PC-3 (cell line): ENCODE measurements at regions of chr1 and their contacts with region 1.

Region 1: GRCh38 chr1:1231400-1232223 is at the start of gene SDF4:
- DNase-seq: peak; percentile 99
- ATAC-seq: peak; percentile 84
- H3K4me3 ChIP-seq: peak within 1 kb of the TSS; percentile 81
- H3K27ac ChIP-seq: peak within 1 kb of the TSS; percentile 47
- H3K4me1 ChIP-seq: peaks cover 36% of the 10 kb centered on the region
- H3K27me3 ChIP-seq: no peaks in the 10 kb centered on the region
- CTCF ChIP-seq: no peak
- total RNA-seq, gene SDF4: 254 and 317 TPM in 2 replicates

Region 2: GRCh38 chr1:1164701-1165451 is 66.7 kb before region 1 on chr1:
- CTCF ChIA-PET with region 1: no interaction called
- POLR2A ChIA-PET with region 1: no interaction called
- intact Hi-C with region 1: loop called (anchors 2 kb)
- DNase-seq: peak; percentile 82
- ATAC-seq: peak; percentile 34
- H3K4me3 ChIP-seq: peak overlapping the region; percentile 90
- H3K27ac ChIP-seq: peak overlapping the region; percentile 73
- H3K4me1 ChIP-seq: peaks cover 17% of the 10 kb centered on the region
- H3K27me3 ChIP-seq: no peaks in the 10 kb centered on the region
- CTCF ChIP-seq: no peak

Region 3: DNA sequence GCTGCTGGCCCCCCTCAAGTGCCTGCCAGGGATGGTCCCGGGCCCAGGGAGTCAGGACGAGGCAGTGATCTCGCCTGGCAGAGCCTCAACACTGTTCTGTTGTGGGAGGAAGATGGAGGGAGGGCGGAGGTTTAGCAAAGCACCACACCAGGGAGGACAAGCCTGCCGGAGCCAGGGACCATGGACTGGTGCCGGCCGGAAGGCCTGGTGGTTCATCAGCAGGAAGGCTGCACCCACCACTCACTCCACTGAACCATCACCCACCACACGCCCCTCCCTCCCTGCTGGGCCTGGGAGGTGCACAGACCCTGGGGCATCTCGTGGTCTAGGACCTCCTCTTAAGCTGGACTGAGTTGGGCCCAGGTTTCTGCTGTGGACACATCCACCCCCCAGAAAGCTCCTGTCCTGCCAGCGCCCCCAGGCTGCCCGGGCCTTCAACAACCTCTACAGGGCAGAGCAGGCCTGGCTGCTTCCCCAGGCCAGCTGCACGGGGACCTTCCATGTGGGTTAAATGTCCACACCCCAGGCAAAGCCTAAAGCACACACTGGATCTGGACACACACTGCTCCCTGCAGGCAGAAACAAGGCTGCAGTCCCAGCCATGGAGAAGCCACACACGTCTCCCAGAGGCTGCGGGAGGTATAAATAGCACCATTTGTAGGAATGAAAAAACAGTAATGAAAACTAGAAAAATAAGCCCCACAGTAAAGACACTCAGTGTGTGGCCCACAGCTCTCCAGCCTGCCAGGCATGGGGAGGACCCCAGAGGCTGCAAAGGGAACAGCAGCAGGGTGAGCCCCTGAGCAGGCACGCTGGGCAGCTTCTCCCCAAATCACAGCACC is 319.2 kb after region 1 on chr1:
- CTCF ChIA-PET with region 1: no interaction called
- POLR2A ChIA-PET with region 1: no interaction called
- intact Hi-C with region 1: no loop called
- DNase-seq: peak; percentile 34
- ATAC-seq: peak; percentile 34
- H3K4me3 ChIP-seq: no peak overlapping the region
- H3K27ac ChIP-seq: no peak overlapping the region
- H3K4me1 ChIP-seq: peaks cover 4% of the 10 kb centered on the region; the same call in 1 of the 2 replicates
- H3K27me3 ChIP-seq: no peaks in the 10 kb centered on the region
- CTCF ChIP-seq: peak; percentile 67